ENCODE measurements at regions of chr6 and their contacts with region 1.

Region 1: DNA sequence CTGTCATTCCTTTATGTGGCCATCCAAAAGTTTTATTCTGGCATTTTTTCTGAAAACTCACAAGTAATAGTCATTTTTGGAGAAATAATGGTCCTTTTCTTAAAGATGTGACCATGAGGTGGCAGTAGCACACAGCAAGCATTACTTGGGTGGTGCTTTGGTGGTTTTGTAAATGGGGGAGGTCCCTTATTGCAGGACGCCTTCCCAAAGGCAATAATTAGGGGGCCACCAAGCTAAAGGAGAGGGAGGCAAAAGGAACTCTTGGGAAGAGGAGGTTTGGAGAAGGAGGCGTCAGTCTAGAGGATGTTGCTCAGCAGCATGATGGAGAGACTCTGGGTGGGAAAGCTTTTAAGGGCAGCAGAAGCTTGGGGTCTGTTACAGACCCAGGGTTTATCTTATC is 422.6 kb upstream of the MMS22L start:
- DNase-seq: no peak
- ATAC-seq: no peak
- H3K4me3 Mint-ChIP-seq: no peak overlapping the region
- H3K27ac Mint-ChIP-seq: no peak overlapping the region
- H3K4me1 Mint-ChIP-seq: no peaks in the 10 kb centered on the region
- H3K27me3 Mint-ChIP-seq: no peaks in the 10 kb centered on the region
- CTCF ChIP-seq: no peak

Region 2: DNA sequence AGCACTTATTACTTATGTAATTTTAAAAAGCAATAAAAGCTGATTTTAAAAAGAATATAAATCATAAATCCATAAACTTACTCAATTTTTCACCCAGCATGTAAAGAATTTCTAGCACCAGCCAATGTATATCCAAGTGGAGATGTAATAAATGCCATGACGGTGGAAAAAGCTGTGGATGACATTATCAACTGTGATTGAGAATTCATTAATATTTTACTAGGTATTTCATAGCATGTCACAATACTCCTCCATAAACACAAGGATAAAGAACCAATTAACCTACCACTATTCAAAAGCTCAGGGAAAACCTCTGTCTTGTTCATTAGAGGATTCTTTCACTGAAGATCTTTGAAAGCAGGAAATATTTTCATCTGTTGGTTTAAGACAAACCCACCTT is 435.7 kb before region 1 on chr6:
- CTCF ChIA-PET with region 1: no interaction called
- POLR2A ChIA-PET with region 1: no interaction called
- intact Hi-C with region 1: no loop called
- DNase-seq: no peak
- ATAC-seq: no peak
- H3K4me3 Mint-ChIP-seq: no peak overlapping the region
- H3K27ac Mint-ChIP-seq: no peak overlapping the region
- H3K4me1 Mint-ChIP-seq: no peaks in the 10 kb centered on the region
- H3K27me3 Mint-ChIP-seq: no peaks in the 10 kb centered on the region
- CTCF ChIP-seq: no peak

Region 3: DNA sequence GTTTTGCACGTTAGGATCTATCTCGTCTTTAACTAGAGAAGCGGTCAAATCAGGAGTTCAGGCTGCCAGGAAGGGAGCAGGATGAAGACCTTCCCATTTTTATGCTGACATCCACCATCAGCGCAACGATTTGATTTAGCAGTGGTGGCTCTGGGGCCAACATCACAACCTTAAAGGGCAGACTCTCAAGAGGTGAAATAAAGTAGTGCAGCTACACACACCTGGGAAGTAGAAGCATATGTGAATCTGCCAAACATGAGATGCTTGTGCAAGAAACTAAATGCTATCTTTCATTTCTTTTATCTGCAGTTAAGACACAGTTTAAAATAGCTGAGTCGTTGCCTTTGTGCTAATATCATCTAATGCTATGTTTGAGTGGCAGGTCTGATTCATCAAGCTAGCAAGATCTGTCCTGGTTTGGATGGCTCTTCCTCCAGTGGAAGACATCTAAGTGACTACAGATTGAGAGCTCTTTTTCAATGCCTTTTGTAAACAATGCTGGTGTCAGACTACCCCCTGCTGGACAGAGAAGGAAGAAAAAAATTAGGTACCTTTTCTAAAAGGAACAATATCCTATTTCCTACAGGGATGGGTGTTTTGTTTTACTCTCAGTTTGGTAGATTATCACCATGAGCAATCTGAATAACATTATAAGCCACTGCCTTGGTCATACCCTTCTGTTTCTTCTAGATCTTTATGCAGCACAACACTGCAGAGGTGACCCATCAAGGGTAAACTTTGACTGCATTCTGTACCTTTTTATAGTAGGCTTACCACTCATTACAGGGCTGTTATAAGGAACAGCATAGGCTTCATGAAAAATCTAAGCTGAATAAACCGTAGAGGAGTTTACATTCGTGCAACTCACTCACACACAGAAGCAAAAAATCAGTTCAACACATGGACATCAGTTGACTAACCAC is 1413.8 kb after region 1 on chr6:
- CTCF ChIA-PET with region 1: interaction called, 4 read pairs
- POLR2A ChIA-PET with region 1: no interaction called
- intact Hi-C with region 1: loop called (anchors 10 kb)
- DNase-seq: no peak
- ATAC-seq: no peak
- H3K4me3 Mint-ChIP-seq: no peak overlapping the region
- H3K27ac Mint-ChIP-seq: no peak overlapping the region
- H3K4me1 Mint-ChIP-seq: no peaks in the 10 kb centered on the region
- H3K27me3 Mint-ChIP-seq: peaks cover 15% of the 10 kb centered on the region
- CTCF ChIP-seq: no peak

Measured in activated B cell treated with CpG ODN at 0.5 μM for 24 hours (primary cell).